A549 (cell line): ENCODE measurements at regions of chr20 and their contacts with region 1.

Region 1: GRCh38 chr20:44217342-44218092 is 6.9 kb upstream of the OSER1 start:
- DNase-seq: peak; percentile 69 to 80
- ATAC-seq: peak; percentile 78 to 90
- H3K4me3 ChIP-seq: no peak overlapping the region
- H3K27ac ChIP-seq: no peak overlapping the region
- H3K4me1 ChIP-seq: no peaks in the 10 kb centered on the region; the same call in 2 of the 3 replicates
- CTCF ChIP-seq: peak; percentile 97
- EP300 ChIP-seq: no peak
- POLR2A ChIP-seq: no peak
- RAD21 ChIP-seq: peak; percentile 96 to 99

Region 2: GRCh38 chr20:43914311-43915210 is 303.0 kb before region 1 on chr20 and contains the start of gene TOX2:
- CTCF ChIA-PET with region 1: no interaction called
- POLR2A ChIA-PET with region 1: no interaction called
- DNase-seq: peak; percentile 21 to 60
- ATAC-seq: peak; percentile 88 to 91
- H3K4me3 ChIP-seq: peak within 1 kb of the TSS; percentile 87
- H3K27ac ChIP-seq: peak within 1 kb of the TSS; percentile 85 to 98
- H3K4me1 ChIP-seq: peaks cover 8% of the 10 kb centered on the region; the same call in 2 of the 3 replicates
- CTCF ChIP-seq: no peak
- EP300 ChIP-seq: no peak
- POLR2A ChIP-seq: no peak
- RAD21 ChIP-seq: no peak
- polyA plus RNA-seq, gene TOX2: 2.5 and 3.4 TPM in 2 replicates

Region 3: DNA sequence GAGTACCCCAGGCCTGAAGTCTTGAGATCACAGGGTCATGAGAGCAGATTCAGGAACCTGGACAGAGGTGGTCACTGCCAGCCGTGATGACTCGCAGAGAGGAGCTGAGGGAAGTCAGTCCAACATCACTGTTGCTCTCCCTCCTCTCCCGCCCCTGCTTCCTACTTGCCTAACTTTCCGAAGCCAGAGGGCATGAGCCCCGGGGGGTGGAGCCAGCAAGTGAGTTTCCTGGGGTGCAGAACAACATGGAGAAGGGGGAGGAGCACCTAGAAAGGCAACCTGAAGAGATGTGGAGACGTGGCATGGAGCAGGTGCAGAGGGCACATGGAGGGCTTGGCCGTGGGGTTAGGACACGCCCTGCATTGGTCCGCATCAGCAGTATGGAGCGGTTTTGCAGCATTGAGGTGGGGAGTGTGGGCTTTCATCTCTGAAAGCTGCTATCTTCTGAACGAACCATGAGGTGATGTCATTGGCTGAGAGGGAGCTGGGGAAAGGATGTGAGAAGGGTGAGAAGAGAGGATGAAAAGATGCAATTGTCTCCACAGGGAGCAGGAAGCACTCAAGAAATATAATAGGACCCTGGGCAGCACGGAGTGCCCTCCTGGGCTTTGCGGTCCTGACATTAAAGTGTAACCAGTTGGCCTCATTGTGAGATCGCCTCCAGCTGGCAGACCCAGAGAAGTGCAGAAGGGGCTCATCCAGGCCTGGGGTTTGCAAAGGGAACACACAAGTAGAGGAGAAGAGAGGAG is 54.6 kb after region 1 on chr20:
- CTCF ChIA-PET with region 1: interaction called, 13 read pairs
- POLR2A ChIA-PET with region 1: no interaction called
- DNase-seq: no peak
- ATAC-seq: peak in 1 of 2 experiments; percentile 36; a peak in 1 of 6 replicates
- H3K4me3 ChIP-seq: no peak overlapping the region
- H3K27ac ChIP-seq: no peak overlapping the region
- H3K4me1 ChIP-seq: no peaks in the 10 kb centered on the region
- CTCF ChIP-seq: 0 out of 3 replicates have a peak, but pooled peaks have one; percentile 12
- EP300 ChIP-seq: no peak
- POLR2A ChIP-seq: no peak
- RAD21 ChIP-seq: no peak

Region 4: DNA sequence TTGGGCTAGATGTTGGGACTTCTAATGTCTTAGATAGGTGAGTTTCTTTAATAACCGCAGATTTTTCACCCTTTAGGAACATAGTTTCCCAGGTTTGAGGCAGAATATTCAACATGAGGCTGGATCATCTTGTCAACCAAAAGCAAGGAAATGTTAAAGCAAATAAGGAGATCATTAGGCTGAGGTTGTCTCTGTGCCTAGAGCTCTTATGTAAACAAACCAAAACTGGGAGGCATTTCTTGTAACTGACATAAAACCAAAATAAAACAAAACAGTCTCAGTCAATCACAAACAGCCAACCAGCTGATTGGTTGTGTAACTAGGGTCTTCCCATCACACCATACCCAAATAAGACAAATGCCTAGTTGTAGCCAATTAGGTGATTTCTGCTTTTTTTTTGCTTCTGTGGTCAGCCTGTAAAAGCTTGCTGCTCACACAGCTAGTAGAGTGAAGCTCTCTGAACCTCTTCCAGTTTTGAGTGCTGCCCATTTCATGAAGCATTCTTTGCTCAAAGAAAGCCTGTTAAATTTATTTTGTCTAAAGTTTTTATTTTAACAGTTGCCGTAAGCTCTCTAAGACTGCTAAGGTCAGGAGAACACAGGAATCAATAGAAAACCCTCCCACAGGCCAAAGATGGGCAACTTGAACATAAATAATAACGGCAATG is 102.4 kb after region 1 on chr20:
- CTCF ChIA-PET with region 1: interaction called, 337 read pairs
- POLR2A ChIA-PET with region 1: no interaction called
- DNase-seq: peak in 1 of 2 experiments; percentile 34
- ATAC-seq: no peak
- H3K4me3 ChIP-seq: no peak overlapping the region
- H3K27ac ChIP-seq: no peak overlapping the region
- H3K4me1 ChIP-seq: peaks cover 12% of the 10 kb centered on the region
- CTCF ChIP-seq: no peak
- EP300 ChIP-seq: no peak
- POLR2A ChIP-seq: no peak
- RAD21 ChIP-seq: no peak

Region 5: DNA sequence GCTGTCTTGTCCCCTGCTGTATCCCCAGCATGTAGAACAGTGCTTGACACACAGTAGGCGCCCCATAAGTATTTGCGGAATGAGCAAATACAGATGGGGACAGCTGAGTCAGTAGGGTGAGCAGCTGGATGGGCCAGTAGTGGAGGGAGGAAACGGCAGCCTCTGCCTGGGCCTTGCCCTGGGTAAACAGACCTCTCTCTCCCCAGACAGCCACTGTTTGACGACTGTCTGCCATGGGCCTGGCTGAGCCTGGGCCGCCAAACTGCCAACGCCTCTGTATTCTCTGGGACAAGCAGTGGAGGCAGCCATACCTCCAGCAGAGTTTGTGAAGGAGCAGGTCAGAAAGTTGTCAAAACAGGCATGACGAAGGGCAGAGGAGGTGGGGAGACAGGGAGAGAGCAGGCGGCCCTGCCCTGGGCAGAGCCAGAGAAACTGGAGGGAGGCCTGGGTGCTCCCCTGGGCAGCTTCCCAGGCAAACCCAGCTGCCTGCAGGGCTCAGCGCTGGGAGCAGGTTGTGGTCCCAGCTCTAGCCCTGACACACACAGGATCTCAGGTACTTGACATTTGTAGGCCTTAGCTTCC is 153.2 kb after region 1 on chr20:
- CTCF ChIA-PET with region 1: interaction called, 37 read pairs
- POLR2A ChIA-PET with region 1: no interaction called
- DNase-seq: peak; percentile 90 to 97
- ATAC-seq: peak; percentile 99 to 100
- H3K4me3 ChIP-seq: no peak overlapping the region
- H3K27ac ChIP-seq: peak overlapping the region; percentile 90 to 95
- H3K4me1 ChIP-seq: peaks cover 61% of the 10 kb centered on the region
- CTCF ChIP-seq: no peak
- EP300 ChIP-seq: peak; percentile 72
- POLR2A ChIP-seq: peak; percentile 32; the same call in 1 of the 2 replicates
- RAD21 ChIP-seq: peak in 1 of 2 experiments; percentile 18; a peak in 2 of 5 replicates

Region 6: GRCh38 chr20:44448753-44449546 is 231.4 kb after region 1 on chr20:
- CTCF ChIA-PET with region 1: interaction called, 440 read pairs
- POLR2A ChIA-PET with region 1: no interaction called
- DNase-seq: peak in 1 of 2 experiments; percentile 61
- ATAC-seq: peak; percentile 44 to 67; a peak in 3 of 6 replicates
- H3K4me3 ChIP-seq: no peak overlapping the region
- H3K27ac ChIP-seq: no peak overlapping the region
- H3K4me1 ChIP-seq: no peaks in the 10 kb centered on the region
- CTCF ChIP-seq: peak; percentile 24; the same call in 1 of the 3 replicates
- EP300 ChIP-seq: no peak
- POLR2A ChIP-seq: no peak
- RAD21 ChIP-seq: no peak

Region 7: GRCh38 chr20:44683263-44684046 is 465.9 kb after region 1 on chr20:
- CTCF ChIA-PET with region 1: interaction called, 31 read pairs
- POLR2A ChIA-PET with region 1: no interaction called
- DNase-seq: peak; percentile 75 to 91
- ATAC-seq: peak; percentile 86 to 87
- H3K4me3 ChIP-seq: no peak overlapping the region
- H3K27ac ChIP-seq: peak overlapping the region in 1 of 2 experiments; percentile 89; a peak in 1 of 6 replicates
- H3K4me1 ChIP-seq: peaks cover 22% of the 10 kb centered on the region
- CTCF ChIP-seq: peak; percentile 83
- EP300 ChIP-seq: no peak
- POLR2A ChIP-seq: no peak
- RAD21 ChIP-seq: peak; percentile 77 to 81